Pancreas (tissue), 10 donors: ENCODE measurements at regions of chr3 and their contacts with region 1.

Region 1: DNA sequence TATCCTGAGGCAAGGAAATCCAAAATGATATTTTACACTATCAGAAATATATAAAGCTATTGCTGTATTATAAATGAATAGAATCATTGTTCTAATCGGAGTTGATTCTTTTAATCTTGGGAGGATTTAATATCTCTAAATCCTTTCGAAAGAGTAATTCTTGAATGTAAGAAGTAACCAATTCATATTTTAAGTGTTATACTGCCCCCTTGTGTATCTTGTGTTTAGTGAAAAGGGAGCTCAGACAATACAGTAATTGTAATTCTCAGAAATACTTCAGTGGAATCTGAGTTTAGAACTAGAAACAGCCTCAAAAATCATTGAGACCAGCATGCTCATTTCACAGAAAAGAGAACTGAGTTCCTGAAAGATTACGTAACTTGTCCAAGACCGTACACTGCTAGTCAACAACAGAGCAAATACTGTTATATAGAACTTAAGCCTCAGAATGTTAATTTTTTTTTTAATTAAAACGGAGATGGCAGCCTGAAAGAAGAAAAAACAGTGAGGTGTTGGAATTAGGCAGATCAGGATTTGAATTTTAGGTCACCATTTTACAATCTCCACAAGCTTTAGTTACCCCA is 42.9 kb downstream of the PLCH1 start:
- DNase-seq: no peak
- ATAC-seq: peak; percentile 54 to 73 (median 70)
- H3K4me3 ChIP-seq: no peak overlapping the region
- H3K27ac ChIP-seq: no peak overlapping the region
- H3K4me1 ChIP-seq: no peaks in the 10 kb centered on the region
- H3K27me3 ChIP-seq: no peaks in the 10 kb centered on the region
- CTCF ChIP-seq: peak; percentile 52 to 76 (median 60)

Region 2: GRCh38 chr3:155352900-155353490 is 349.0 kb before region 1 on chr3:
- intact Hi-C with region 1: loop called in 1 of 3 experiments (anchors 10 kb)
- DNase-seq: no peak
- ATAC-seq: peak in 3 of 4 donors; percentile 63 to 70 (median 66)
- H3K4me3 ChIP-seq: no peak overlapping the region
- H3K27ac ChIP-seq: no peak overlapping the region
- H3K4me1 ChIP-seq: no peaks in the 10 kb centered on the region
- H3K27me3 ChIP-seq: no peaks in the 10 kb centered on the region
- CTCF ChIP-seq: peak in 3 of 4 donors; percentile 20 to 22 (median 21)

Region 3: DNA sequence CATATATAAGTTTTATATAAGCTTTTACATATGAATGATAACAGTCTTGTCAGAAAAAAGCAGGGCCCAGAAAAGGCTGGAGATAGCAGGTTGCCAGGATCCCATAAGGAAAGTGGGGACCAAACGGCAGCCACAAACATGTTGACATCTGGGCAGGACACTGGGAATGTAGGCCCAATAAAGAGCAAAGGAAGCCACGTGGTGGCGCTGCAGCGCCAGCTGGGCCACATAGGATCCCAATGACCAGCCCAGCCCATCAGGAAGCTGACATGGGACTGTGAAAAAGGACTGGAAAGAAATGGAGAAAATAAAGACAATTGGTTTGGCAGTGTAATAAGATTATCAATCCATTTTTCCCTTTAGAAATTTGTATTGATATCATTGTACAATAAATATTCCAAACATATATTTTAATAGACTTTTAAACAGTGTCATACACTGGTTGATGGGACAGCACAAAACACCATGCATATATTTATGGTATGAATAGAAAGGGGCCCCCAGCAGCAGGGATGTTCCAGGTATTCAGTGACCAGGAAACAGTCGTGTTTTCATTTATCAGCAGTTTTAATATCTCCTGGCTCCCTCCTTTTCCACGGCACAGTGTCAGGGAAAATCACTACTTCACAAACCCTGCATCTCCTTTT is 319.5 kb before region 1 on chr3:
- intact Hi-C with region 1: loop called in 2 of 3 experiments (anchors 10 kb)
- DNase-seq: peak; percentile 54 to 88 (median 76)
- ATAC-seq: peak; percentile 92 to 99 (median 97)
- H3K4me3 ChIP-seq: no peak overlapping the region
- H3K27ac ChIP-seq: no peak overlapping the region
- H3K4me1 ChIP-seq: no peaks in the 10 kb centered on the region
- H3K27me3 ChIP-seq: no peaks in the 10 kb centered on the region
- CTCF ChIP-seq: peak; percentile 20 to 49 (median 42)

Region 4: DNA sequence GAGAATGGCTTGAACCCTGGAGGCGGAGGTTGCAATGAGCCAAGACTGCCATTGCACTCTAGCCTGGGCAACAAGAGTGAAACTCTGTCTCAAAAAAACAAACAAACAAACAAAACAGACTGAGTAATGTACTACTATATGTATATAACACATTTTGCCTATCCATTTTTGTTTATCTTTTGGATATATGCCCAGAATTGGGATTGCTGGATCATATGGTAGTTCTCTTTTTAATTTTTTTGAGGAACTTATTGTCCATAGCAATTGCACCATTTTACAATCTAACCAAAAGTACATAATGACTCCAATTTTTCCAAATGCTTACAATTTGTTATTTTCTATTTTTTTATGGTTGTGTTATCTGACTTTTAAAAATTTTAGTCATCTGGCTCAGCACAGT is 215.8 kb after region 1 on chr3:
- intact Hi-C with region 1: no loop called
- DNase-seq: no peak
- ATAC-seq: no peak
- H3K4me3 ChIP-seq: no peak overlapping the region
- H3K27ac ChIP-seq: no peak overlapping the region
- H3K4me1 ChIP-seq: no peaks in the 10 kb centered on the region
- H3K27me3 ChIP-seq: no peaks in the 10 kb centered on the region
- CTCF ChIP-seq: no peak